GM13976 (cell line): ENCODE measurements at regions of chr13 and their contacts with region 1.

Region 1: DNA sequence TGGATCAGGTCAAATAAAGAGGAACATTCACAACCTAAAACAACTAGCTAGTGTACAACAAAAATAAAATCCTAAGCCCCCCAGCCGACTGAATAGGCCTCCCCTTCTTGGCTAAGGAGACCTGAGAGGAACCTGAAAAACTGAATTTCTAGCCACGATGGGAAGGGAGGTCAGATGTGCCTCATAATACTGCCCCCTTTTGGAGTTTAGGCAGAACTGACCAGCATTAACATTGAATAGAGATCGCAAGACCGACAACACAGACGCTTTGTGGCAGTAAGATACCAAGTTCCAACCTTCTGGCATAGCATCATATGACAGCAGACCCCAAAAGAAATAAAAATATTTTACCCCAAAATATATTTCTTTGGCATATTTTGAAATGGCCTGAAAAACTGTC is 15.9 kb downstream of the CBY2 start:
- DNase-seq: peak; percentile 56
- CTCF ChIP-seq: peak; percentile 43

Region 2: GRCh38 chr13:45367358-45367757 is 350.7 kb before region 1 on chr13:
- in situ Hi-C with region 1: loop called (anchors 25 kb)
- DNase-seq: peak; percentile 86
- CTCF ChIP-seq: no peak

Region 3: GRCh38 chr13:45623515-45624090 is 94.5 kb before region 1 on chr13:
- in situ Hi-C with region 1: loop called (anchors 5 kb)
- DNase-seq: peak; percentile 42
- CTCF ChIP-seq: peak; percentile 42